Posterior vena cava (tissue), 2 donors: ENCODE measurements at regions of chr5 and their contacts with region 1.

Region 1: GRCh38 chr5:141649131-141649607 is 2.0 kb downstream of the FCHSD1 start:
- DNase-seq: no peak

Region 2: GRCh38 chr5:140982083-140982716 is 667.0 kb before region 1 on chr5:
- intact Hi-C with region 1: loop called in 1 of 2 experiments (anchors 5 kb)
- DNase-seq: no peak

Region 3: DNA sequence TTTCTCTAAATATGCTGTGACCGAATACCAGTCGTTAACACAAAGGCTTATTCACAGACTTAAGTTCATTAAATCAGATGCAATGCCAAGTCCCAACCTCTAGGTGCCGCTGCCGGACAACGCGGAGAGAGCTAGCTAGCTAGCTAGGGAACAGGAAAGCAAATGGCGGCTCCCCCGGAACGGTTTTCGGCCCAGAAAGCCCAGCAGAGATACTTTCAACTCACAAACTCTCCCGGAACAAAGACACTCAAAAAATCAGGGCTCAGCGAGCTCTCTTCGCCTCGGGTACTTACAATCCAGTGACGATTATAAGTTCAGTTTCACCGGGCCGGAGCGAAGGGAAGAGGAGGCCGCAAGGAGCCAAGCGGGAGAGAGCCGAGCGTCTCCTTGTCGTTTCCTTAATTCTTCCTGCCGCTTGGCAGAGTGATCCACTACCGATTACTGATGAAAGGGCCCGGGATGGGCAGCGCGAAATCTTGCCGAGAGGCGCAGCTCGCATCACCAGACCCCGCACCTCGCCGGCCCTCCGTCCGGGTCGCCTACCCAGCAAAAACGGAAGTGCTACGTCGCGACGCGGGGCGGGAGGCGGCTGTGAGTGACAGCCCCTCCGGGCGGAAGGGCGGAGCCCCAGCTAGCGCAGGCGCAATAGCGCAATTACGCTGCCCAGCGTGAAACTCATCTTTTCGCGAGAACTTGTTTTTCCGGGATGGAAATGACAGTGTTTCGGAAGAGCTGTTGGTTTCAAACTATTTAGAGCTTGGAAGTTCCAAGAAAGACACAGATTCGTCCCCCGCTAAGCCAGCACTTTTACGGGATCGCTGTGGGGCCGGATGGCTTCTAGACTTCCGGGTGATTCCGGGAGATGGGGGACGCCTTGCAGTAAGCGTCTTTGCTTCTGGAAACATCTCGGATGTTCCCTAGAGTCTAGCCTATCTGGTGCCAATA is 328.7 kb before region 1 on chr5 and contains the start of gene TAF7:
- intact Hi-C with region 1: no loop called
- DNase-seq: peak; percentile 98
- total RNA-seq, gene TAF7: 57.9 to 63.1 TPM

Region 4: GRCh38 chr5:141590127-141590526 is 59.0 kb before region 1 on chr5:
- intact Hi-C with region 1: no loop called
- DNase-seq: no peak